A549 (cell line): ENCODE measurements at regions of chr6 and their contacts with region 1.

Region 1: DNA sequence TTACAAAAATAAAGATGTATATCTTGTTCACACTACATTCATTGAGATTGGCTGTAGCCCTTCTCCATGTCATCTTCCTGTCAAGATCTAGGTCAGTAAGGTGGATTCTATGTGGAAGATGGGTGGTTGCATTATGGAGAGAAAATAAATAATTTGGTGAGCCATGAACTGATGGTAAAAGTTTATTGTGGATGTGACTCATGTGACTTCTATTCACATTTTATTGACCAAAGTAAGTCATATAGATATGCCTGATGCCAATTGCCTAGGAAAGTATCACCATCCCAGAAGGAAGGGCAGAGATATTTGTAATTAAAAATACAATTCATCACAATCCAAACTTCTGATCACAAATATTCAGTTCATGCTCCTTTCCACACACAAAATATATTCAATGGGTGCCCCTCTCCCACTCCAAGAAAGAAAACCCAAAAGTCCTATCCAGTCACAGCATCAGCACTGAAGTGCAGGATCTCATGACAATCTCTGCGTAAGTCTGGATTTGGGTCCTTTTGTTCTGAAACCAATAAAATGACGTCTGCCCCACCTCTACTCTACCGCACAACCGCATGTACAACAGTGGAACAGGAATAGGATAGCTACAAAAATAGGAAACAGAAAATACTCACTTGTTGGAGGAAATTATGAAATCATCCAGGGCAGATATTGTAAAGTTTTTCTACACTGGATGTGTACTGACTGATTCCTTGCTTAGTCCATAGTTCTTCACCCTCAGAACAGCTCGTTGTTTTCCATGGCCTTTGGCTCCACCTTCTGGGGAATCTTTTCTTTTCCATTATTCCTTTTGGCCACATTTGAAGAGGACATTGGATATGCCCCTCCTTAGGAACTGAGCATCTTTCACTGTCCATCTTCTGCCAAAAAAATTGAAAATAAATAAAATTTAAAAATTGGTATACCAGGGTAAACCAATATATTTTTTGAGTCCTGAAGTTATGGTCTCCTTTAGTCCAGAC is 16.1 kb upstream of the SLC17A3 start:
- DNase-seq: peak in 1 of 2 experiments; percentile 47
- ATAC-seq: peak; percentile 86 to 87
- H3K4me3 ChIP-seq: no peak overlapping the region
- H3K27ac ChIP-seq: peak overlapping the region; percentile 49 to 70
- H3K4me1 ChIP-seq: peaks cover 17% of the 10 kb centered on the region; the same call in 2 of the 3 replicates
- CTCF ChIP-seq: peak; percentile 73
- EP300 ChIP-seq: no peak
- POLR2A ChIP-seq: no peak
- RAD21 ChIP-seq: peak; percentile 84 to 88

Region 2: GRCh38 chr6:25717866-25718740 is 172.1 kb before region 1 on chr6:
- CTCF ChIA-PET with region 1: interaction called, 15 read pairs
- POLR2A ChIA-PET with region 1: no interaction called
- DNase-seq: peak; percentile 13 to 19
- ATAC-seq: 0 out of 6 replicates have a peak, but pooled peaks of 1 of the 2 experiments have one; percentile 45
- H3K4me3 ChIP-seq: no peak overlapping the region
- H3K27ac ChIP-seq: no peak overlapping the region
- H3K4me1 ChIP-seq: no peaks in the 10 kb centered on the region
- CTCF ChIP-seq: peak; percentile 70
- EP300 ChIP-seq: no peak
- POLR2A ChIP-seq: no peak
- RAD21 ChIP-seq: peak; percentile 61 to 71